ENCODE measurements at regions of chr4 and their contacts with region 1.

Region 1: GRCh38 chr4:76993787-76994641 is 44.5 kb downstream of the SEPTIN11 start:
- DNase-seq: peak; percentile 82
- H3K4me3 Mint-ChIP-seq: peak overlapping the region; percentile 53
- H3K27ac Mint-ChIP-seq: peak overlapping the region; percentile 65
- H3K4me1 Mint-ChIP-seq: peaks cover 57% of the 10 kb centered on the region
- H3K27me3 Mint-ChIP-seq: no peaks in the 10 kb centered on the region

Region 2: DNA sequence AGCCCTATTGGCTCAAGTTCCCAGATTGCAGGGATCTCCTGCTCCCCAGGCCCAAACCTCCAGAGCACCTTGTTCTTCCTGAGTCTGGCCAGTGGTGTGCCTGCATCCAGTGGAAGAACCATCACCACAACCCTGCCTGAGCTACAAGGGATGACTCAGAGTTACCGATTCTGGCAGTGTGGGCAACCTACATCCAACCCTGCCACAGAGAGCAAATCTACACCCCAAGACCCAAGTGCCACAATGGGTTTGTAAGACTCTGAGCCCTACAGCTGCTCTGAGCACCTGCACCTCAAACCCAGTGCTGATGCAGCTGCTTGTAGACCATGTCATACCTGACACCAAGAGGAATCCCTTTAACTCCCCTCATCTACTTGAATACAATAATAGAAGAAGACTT is 206.1 kb before region 1 on chr4:
- CTCF ChIA-PET with region 1: no interaction called
- intact Hi-C with region 1: no loop called
- DNase-seq: no peak
- H3K4me3 Mint-ChIP-seq: no peak overlapping the region
- H3K27ac Mint-ChIP-seq: no peak overlapping the region
- H3K4me1 Mint-ChIP-seq: no peaks in the 10 kb centered on the region
- H3K27me3 Mint-ChIP-seq: peaks cover 2% of the 10 kb centered on the region

Region 3: DNA sequence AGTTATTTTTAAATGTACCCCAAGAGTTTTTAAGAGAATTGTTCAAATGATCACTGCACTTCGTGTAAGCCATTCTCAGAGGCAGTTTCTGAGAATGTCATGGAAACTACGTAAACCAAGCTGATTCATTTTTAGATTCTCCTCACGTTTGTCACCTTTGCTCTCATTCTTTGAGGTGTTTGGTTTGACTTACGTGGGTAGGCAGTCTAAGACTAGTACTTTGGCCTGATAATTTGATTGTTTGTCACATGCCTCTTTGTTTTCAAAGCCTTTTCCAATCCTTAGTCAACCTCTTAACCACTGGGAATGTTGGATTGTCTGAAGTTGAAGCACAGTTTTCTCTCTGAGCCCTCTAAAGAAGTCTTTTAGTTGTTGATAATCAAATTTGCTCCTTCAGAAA is 34.0 kb before region 1 on chr4:
- CTCF ChIA-PET with region 1: no interaction called
- intact Hi-C with region 1: loop called (anchors 1 kb)
- DNase-seq: peak; percentile 10
- H3K4me3 Mint-ChIP-seq: no peak overlapping the region
- H3K27ac Mint-ChIP-seq: no peak overlapping the region
- H3K4me1 Mint-ChIP-seq: peaks cover 19% of the 10 kb centered on the region
- H3K27me3 Mint-ChIP-seq: peaks cover 5% of the 10 kb centered on the region

Region 4: GRCh38 chr4:77014256-77014655 is 20.2 kb after region 1 on chr4:
- CTCF ChIA-PET with region 1: no interaction called
- intact Hi-C with region 1: loop called (anchors 1 kb)
- DNase-seq: no peak
- H3K4me3 Mint-ChIP-seq: no peak overlapping the region
- H3K27ac Mint-ChIP-seq: no peak overlapping the region
- H3K4me1 Mint-ChIP-seq: peaks cover 42% of the 10 kb centered on the region
- H3K27me3 Mint-ChIP-seq: no peaks in the 10 kb centered on the region

Region 5: DNA sequence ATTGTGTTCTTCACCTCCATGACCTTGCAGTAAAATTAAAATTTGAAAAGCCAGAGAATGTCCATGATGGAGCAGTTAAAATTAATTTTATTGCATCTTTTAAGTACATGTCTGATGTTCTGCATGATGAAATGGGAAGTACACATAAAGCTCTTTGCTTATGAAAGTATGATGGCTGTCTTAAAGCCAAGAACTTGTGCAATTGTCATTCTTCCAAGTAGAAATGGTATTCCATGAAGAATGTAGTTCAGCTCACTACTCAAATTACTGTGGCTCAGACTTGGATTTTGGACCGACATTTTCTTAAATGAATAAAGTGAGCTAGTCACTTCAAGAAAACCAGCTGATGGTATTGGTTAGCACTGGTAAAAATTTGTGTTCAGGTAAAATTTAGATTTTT is 449.9 kb after region 1 on chr4:
- CTCF ChIA-PET with region 1: no interaction called
- intact Hi-C with region 1: no loop called
- DNase-seq: no peak
- H3K4me3 Mint-ChIP-seq: no peak overlapping the region
- H3K27ac Mint-ChIP-seq: no peak overlapping the region
- H3K4me1 Mint-ChIP-seq: no peaks in the 10 kb centered on the region
- H3K27me3 Mint-ChIP-seq: peaks cover 7% of the 10 kb centered on the region